ENCODE measurements at regions of chr20 and their contacts with region 1.

Region 1: GRCh38 chr20:49219089-49219923 is at the start of gene DDX27:
- DNase-seq: peak; percentile 98
- H3K4me3 Mint-ChIP-seq: peak within 1 kb of the TSS; percentile 88
- H3K27ac Mint-ChIP-seq: peak within 1 kb of the TSS; percentile 93
- H3K4me1 Mint-ChIP-seq: peaks cover 24% of the 10 kb centered on the region
- H3K27me3 Mint-ChIP-seq: no peaks in the 10 kb centered on the region
- total RNA-seq, gene DDX27: 32.5 to 34.2 TPM

Region 2: GRCh38 chr20:49123982-49124381 is 95.3 kb before region 1 on chr20:
- CTCF ChIA-PET with region 1: interaction called, 21 read pairs
- POLR2A ChIA-PET with region 1: no interaction called
- DNase-seq: no peak
- H3K4me3 Mint-ChIP-seq: no peak overlapping the region
- H3K27ac Mint-ChIP-seq: no peak overlapping the region
- H3K4me1 Mint-ChIP-seq: peaks cover 3% of the 10 kb centered on the region
- H3K27me3 Mint-ChIP-seq: no peaks in the 10 kb centered on the region

Region 3: DNA sequence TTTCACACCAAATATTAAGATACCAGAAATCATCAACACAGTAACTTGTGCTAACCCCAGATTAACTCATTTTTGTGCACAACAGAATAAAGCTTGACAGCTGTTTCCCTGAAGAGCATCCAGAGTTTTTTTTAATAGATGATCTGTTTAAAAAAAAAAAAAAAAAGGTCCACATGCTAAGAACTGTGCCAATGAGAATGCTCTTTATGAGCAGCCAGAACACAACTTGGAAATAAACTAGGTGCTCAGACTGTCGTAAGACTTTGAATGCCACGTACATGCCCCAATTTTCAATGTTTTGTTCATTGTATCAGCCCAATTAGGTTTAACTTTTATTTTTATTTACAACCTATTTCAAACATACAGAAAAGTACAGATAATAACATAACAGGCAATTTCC is 78.5 kb before region 1 on chr20:
- CTCF ChIA-PET with region 1: interaction called, 156 read pairs
- POLR2A ChIA-PET with region 1: interaction called, 3 read pairs
- DNase-seq: no peak
- H3K4me3 Mint-ChIP-seq: no peak overlapping the region
- H3K27ac Mint-ChIP-seq: no peak overlapping the region
- H3K4me1 Mint-ChIP-seq: peaks cover 15% of the 10 kb centered on the region
- H3K27me3 Mint-ChIP-seq: no peaks in the 10 kb centered on the region

Region 4: GRCh38 chr20:49179368-49180277 is 39.7 kb before region 1 on chr20:
- CTCF ChIA-PET with region 1: interaction called, 32 read pairs
- POLR2A ChIA-PET with region 1: interaction called, 4 read pairs
- DNase-seq: no peak
- H3K4me3 Mint-ChIP-seq: no peak overlapping the region
- H3K27ac Mint-ChIP-seq: no peak overlapping the region
- H3K4me1 Mint-ChIP-seq: peaks cover 43% of the 10 kb centered on the region
- H3K27me3 Mint-ChIP-seq: no peaks in the 10 kb centered on the region

Region 5: DNA sequence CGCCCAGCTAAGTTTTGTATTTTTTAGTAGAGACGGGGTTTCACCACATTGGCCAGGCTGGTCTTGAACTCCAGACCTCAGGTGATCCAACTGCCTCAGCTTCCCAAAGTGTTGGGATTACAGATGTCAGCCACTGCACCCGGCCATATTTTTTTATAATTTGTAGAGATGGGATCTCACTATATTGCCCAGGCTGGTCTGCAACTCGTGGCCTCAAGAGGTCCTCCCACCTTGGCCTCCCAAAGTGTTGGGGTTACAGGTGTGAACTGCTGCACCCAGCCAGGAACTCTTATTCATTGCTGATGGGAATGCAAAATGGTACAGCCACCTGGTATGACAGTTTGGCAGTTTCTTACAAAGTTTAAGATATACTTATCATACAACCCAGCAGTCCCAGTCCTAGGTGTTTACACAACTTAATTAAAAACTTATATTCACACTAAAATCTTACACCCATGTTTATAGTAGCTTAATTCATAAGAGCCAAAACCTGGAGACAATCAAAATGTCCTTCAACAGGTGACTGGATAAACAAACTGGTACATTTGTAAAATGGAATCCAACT is 19.5 kb before region 1 on chr20:
- CTCF ChIA-PET with region 1: interaction called, 22 read pairs
- POLR2A ChIA-PET with region 1: no interaction called
- DNase-seq: no peak
- H3K4me3 Mint-ChIP-seq: no peak overlapping the region
- H3K27ac Mint-ChIP-seq: no peak overlapping the region
- H3K4me1 Mint-ChIP-seq: no peaks in the 10 kb centered on the region
- H3K27me3 Mint-ChIP-seq: no peaks in the 10 kb centered on the region

Region 6: DNA sequence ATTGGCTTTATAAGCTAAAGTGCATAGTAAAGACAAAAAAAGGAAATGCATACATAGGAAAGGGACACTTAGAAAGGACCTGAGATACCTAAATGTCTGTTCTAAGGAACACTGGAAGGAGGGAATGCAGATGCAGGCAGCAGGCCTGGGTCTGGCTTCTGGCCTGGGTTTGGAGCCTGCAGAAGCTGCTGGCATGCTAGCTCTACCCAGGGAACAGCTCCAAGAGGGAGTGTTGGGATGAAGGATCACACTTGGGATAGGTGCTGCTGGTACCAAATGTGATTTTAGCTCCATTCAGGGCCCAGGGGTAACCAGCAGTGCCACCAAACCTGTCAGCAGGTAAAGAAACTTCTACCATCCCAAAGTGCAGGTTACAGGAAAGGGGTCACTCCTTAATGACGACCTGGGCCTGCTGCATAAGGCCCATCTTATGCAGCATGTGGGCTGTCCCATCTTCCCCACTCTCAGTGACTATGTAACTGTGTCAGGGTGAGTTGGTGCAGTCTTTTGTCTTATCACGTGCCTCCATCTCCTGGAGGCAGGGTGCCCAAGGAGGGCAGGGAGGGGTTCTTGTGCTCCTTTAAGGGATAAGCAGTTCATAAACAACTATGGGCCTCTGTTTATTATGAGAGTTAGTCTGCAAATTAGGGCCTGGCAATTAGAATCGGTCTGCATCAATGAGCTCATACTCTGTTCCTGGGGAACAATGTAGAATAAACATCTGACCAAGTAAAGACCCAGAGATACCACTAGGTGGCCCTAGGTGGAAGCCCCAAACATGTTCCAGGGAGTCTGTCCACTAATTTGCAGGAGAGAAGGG is 26.8 kb after region 1 on chr20:
- CTCF ChIA-PET with region 1: interaction called, 14 read pairs
- POLR2A ChIA-PET with region 1: no interaction called
- DNase-seq: no peak
- H3K4me3 Mint-ChIP-seq: no peak overlapping the region
- H3K27ac Mint-ChIP-seq: peak overlapping the region; percentile 38
- H3K4me1 Mint-ChIP-seq: peaks cover 2% of the 10 kb centered on the region
- H3K27me3 Mint-ChIP-seq: no peaks in the 10 kb centered on the region